ENCODE measurements at regions of chr6 and their contacts with region 1.

Region 1: GRCh38 chr6:119349323-119350042 is at the start of gene MAN1A1:
- DNase-seq: peak; percentile 91
- H3K4me3 ChIP-seq: peak within 1 kb of the TSS; percentile 89 to 97 (median 97)
- H3K27ac ChIP-seq: peak within 1 kb of the TSS; percentile 50
- H3K4me1 ChIP-seq: peaks cover 10% of the 10 kb centered on the region
- H3K27me3 ChIP-seq: no peaks in the 10 kb centered on the region
- CTCF ChIP-seq: no peak
- POLR2A ChIP-seq: peak; percentile 56
- total RNA-seq, gene MAN1A1: 12.9 and 13.3 TPM in 2 replicates

Region 2: GRCh38 chr6:118934461-118935330 is 414.8 kb before region 1 on chr6 and contains the start of gene MCM9:
- CTCF ChIA-PET with region 1: no interaction called
- POLR2A ChIA-PET with region 1: no interaction called
- dilution Hi-C with region 1: no loop called
- intact Hi-C with region 1: loop called (anchors 10 kb)
- DNase-seq: peak; percentile 95
- H3K4me3 ChIP-seq: peak within 1 kb of the TSS; percentile 79 to 92 (median 80)
- H3K27ac ChIP-seq: peak within 1 kb of the TSS; percentile 85
- H3K4me1 ChIP-seq: peaks cover 10% of the 10 kb centered on the region
- H3K27me3 ChIP-seq: no peaks in the 10 kb centered on the region
- CTCF ChIP-seq: no peak
- POLR2A ChIP-seq: peak; percentile 66
- total RNA-seq, gene MCM9: 14.1 and 14.6 TPM in 2 replicates

Region 3: GRCh38 chr6:119052292-119052889 is 297.1 kb before region 1 on chr6:
- CTCF ChIA-PET with region 1: no interaction called
- POLR2A ChIA-PET with region 1: no interaction called
- dilution Hi-C with region 1: no loop called
- intact Hi-C with region 1: no loop called
- DNase-seq: no peak
- H3K4me3 ChIP-seq: no peak overlapping the region
- H3K27ac ChIP-seq: no peak overlapping the region
- H3K4me1 ChIP-seq: no peaks in the 10 kb centered on the region
- H3K27me3 ChIP-seq: no peaks in the 10 kb centered on the region
- CTCF ChIP-seq: no peak
- POLR2A ChIP-seq: no peak

Region 4: DNA sequence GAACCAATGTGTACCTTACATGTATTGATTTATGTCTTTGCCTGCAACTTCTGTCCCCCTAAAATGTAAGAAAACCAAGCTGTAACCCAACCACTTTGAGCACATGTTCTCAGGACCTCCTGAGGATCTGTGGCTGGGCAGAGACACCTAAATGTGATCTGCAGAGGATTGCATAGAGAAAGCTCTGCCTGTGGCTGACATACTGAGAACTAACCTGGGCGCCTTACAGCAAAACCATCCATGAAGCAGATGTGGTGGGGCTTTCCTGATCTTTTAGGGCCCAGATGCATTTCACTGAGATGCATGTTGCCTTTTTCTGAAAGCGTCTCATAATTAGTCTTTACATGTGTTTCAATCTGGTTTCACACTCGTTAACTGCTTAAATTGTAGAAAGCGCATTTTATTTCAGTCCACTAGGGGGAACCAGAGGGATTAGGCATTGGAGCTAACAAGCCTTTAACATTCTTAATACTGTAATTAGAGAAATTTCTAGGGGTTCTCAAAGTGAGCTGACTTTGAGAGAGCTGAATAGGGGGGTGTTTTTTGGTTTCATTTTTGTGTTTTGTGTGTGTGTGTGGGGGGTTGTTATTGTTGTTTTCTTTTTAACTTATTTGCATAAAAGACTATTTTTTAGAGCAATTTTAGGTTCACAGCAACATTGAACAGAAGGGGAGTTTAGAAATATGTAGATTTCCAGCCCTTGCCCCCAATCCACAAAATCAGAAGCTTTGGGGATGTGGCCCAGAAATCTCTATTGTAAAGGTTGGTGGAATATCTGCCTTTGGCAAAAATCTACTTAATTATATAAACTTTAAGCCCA is 220.1 kb before region 1 on chr6:
- CTCF ChIA-PET with region 1: interaction called, 11 read pairs
- POLR2A ChIA-PET with region 1: no interaction called
- dilution Hi-C with region 1: no loop called
- intact Hi-C with region 1: loop called (anchors 1 kb)
- DNase-seq: peak; percentile 77
- H3K4me3 ChIP-seq: peak overlapping the region in 1 of 3 experiments; percentile 31
- H3K27ac ChIP-seq: peak overlapping the region; percentile 92
- H3K4me1 ChIP-seq: peaks cover 22% of the 10 kb centered on the region
- H3K27me3 ChIP-seq: no peaks in the 10 kb centered on the region
- CTCF ChIP-seq: peak; percentile 62 to 64
- POLR2A ChIP-seq: no peak

Region 5: DNA sequence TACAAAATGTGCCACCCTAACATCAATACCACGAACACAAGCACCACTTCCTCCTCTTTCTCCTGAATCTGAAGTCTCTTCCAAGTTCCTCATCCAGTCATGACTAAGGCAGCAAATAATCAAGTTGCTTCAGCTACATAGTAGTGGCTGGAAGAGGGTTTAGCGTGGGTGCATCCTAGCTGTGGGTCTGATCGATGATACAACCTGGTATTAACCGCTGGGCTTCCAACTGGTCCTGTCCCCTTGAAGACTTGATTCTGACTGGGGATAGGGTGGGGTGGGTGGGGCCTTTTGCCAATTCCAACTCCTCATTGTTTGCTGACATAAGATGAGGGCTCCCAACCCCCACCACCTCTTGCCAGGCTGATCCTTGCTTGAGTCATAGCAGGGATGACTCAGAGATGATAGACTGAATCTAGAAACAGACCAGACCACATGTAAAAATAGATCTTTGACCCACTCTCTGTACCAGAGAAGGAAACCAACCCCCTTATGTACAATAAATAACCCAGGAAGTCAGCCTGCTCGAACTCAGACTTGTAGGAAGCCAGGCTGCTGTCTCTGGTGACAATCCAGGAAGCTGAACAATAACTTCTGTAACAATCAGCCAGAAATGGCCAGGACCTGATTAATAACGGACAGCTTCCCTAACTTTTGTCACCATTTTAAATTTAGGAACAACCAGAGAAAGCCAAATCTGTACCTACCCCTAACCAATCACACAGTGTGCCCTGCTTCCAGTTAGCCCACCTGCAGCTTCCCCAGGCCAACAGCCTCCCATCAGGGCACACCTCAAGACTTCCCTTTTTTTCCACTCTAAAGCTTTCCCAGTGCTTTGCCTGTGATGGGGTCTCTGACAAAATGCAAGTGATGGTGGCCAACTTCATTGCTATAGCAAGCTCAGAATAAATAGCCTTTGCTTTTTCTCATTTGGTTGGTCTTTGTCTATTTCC is 202.1 kb before region 1 on chr6:
- CTCF ChIA-PET with region 1: interaction called, 13 read pairs
- POLR2A ChIA-PET with region 1: no interaction called
- dilution Hi-C with region 1: no loop called
- intact Hi-C with region 1: loop called (anchors 1 kb)
- DNase-seq: peak; percentile 77
- H3K4me3 ChIP-seq: no peak overlapping the region
- H3K27ac ChIP-seq: peak overlapping the region; percentile 86
- H3K4me1 ChIP-seq: peaks cover 29% of the 10 kb centered on the region
- H3K27me3 ChIP-seq: no peaks in the 10 kb centered on the region
- CTCF ChIP-seq: no peak
- POLR2A ChIP-seq: no peak

Region 6: GRCh38 chr6:119333707-119334295 is 15.7 kb before region 1 on chr6:
- CTCF ChIA-PET with region 1: interaction called, 12 read pairs
- POLR2A ChIA-PET with region 1: interaction called, 4 read pairs
- dilution Hi-C with region 1: no loop called
- intact Hi-C with region 1: loop called (anchors 1 kb)
- DNase-seq: no peak
- H3K4me3 ChIP-seq: no peak overlapping the region
- H3K27ac ChIP-seq: no peak overlapping the region
- H3K4me1 ChIP-seq: peaks cover 15% of the 10 kb centered on the region
- H3K27me3 ChIP-seq: no peaks in the 10 kb centered on the region
- CTCF ChIP-seq: peak in 1 of 2 donors; percentile 23
- POLR2A ChIP-seq: no peak

Region 7: GRCh38 chr6:119736296-119737021 is 387.0 kb after region 1 on chr6:
- CTCF ChIA-PET with region 1: no interaction called
- POLR2A ChIA-PET with region 1: no interaction called
- dilution Hi-C with region 1: no loop called
- intact Hi-C with region 1: loop called (anchors 5 kb)
- DNase-seq: no peak
- H3K4me3 ChIP-seq: no peak overlapping the region
- H3K27ac ChIP-seq: no peak overlapping the region
- H3K4me1 ChIP-seq: no peaks in the 10 kb centered on the region
- H3K27me3 ChIP-seq: no peaks in the 10 kb centered on the region
- CTCF ChIP-seq: no peak
- POLR2A ChIP-seq: no peak

Region 8: DNA sequence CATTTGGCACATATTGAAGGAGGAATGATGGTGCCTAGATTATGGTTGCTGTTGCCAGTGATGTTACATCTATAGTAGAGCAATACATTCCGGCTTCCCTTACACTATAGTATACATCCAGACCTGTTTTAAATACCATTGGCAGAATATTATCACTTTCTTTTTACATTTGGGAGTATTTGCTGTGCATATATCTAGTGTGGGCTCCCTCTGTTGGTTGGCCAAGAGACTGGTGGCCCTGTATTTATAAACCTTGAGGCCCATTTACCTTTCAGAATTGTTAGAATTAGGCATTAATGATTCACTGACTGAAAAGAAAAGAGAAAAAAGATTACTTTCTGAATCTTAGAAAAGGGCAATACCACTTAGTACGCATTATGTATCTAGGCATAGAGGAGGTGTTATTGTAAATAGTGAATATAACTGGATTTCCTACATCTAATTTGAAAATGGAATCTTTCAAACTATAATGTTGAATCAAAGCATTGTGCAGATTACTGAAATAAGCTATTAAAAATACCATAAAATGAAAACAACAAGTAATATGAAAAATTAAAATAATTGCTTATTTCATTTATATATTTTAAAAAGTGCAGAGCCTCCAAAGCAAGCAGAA is 628.9 kb after region 1 on chr6:
- CTCF ChIA-PET with region 1: no interaction called
- POLR2A ChIA-PET with region 1: no interaction called
- dilution Hi-C with region 1: no loop called
- intact Hi-C with region 1: loop called (anchors 5 kb)
- DNase-seq: no peak
- H3K4me3 ChIP-seq: no peak overlapping the region
- H3K27ac ChIP-seq: no peak overlapping the region
- H3K4me1 ChIP-seq: no peaks in the 10 kb centered on the region
- H3K27me3 ChIP-seq: no peaks in the 10 kb centered on the region
- CTCF ChIP-seq: peak in 1 of 2 donors; percentile 13
- POLR2A ChIP-seq: no peak

Measured in endothelial cell of umbilical vein (primary cell).